ENCODE measurements at regions of chr2 and their contacts with region 1.

Region 1: GRCh38 chr2:11583840-11584524 is 50.1 kb downstream of the GREB1 start:
- DNase-seq: peak; percentile 66 to 77
- H3K4me3 ChIP-seq: no peak overlapping the region
- H3K4me3 Mint-ChIP-seq: no peak overlapping the region
- H3K27ac Mint-ChIP-seq: no peak overlapping the region
- H3K4me1 ChIP-seq: 0 out of 2 replicates have a peak, but pooled peaks cover 14% of the 10 kb centered on the region
- H3K4me1 Mint-ChIP-seq: no peaks in the 10 kb centered on the region
- H3K27me3 ChIP-seq: no peaks in the 10 kb centered on the region
- H3K27me3 Mint-ChIP-seq: no peaks in the 10 kb centered on the region
- CTCF ChIP-seq: peak; percentile 84 to 86

Region 2: DNA sequence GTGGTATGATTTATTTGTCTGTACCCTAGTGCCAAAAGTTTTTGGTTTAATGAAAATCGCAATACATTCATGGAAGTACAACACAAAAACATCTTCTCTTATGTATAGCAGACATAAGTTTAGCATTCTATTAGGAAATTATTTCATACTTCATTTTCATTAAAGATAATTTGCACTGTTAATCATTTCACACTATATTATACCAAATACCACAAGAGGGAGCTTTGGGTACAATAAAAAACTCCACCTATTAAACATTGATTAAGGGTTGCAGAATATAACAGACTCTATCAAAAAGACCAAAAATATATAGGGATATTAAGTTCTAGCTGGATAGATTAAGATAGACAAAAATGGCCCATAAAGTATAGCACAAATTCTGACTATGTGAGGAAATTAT is 349.7 kb before region 1 on chr2:
- CTCF ChIA-PET with region 1: no interaction called
- POLR2A ChIA-PET with region 1: no interaction called
- intact Hi-C with region 1: loop called (anchors 10 kb)
- DNase-seq: no peak
- H3K4me3 ChIP-seq: no peak overlapping the region
- H3K4me3 Mint-ChIP-seq: no peak overlapping the region
- H3K27ac Mint-ChIP-seq: no peak overlapping the region
- H3K4me1 ChIP-seq: no peaks in the 10 kb centered on the region
- H3K4me1 Mint-ChIP-seq: peaks cover 10% of the 10 kb centered on the region
- H3K27me3 ChIP-seq: no peaks in the 10 kb centered on the region
- H3K27me3 Mint-ChIP-seq: no peaks in the 10 kb centered on the region
- CTCF ChIP-seq: peak; percentile 13 to 21

Region 3: GRCh38 chr2:11417946-11418585 is 165.9 kb before region 1 on chr2:
- CTCF ChIA-PET with region 1: interaction called, 19 read pairs
- POLR2A ChIA-PET with region 1: no interaction called
- intact Hi-C with region 1: loop called (anchors 1 kb)
- DNase-seq: peak; percentile 63 to 77
- H3K4me3 ChIP-seq: no peak overlapping the region
- H3K4me3 Mint-ChIP-seq: no peak overlapping the region
- H3K27ac Mint-ChIP-seq: no peak overlapping the region
- H3K4me1 ChIP-seq: no peaks in the 10 kb centered on the region
- H3K4me1 Mint-ChIP-seq: no peaks in the 10 kb centered on the region
- H3K27me3 ChIP-seq: no peaks in the 10 kb centered on the region
- H3K27me3 Mint-ChIP-seq: no peaks in the 10 kb centered on the region
- CTCF ChIP-seq: peak; percentile 84 to 85

Region 4: GRCh38 chr2:11437602-11438001 is 146.4 kb before region 1 on chr2:
- CTCF ChIA-PET with region 1: no interaction called
- POLR2A ChIA-PET with region 1: no interaction called
- intact Hi-C with region 1: no loop called
- DNase-seq: no peak
- H3K4me3 ChIP-seq: no peak overlapping the region
- H3K4me3 Mint-ChIP-seq: no peak overlapping the region
- H3K27ac Mint-ChIP-seq: no peak overlapping the region
- H3K4me1 ChIP-seq: no peaks in the 10 kb centered on the region
- H3K4me1 Mint-ChIP-seq: no peaks in the 10 kb centered on the region
- H3K27me3 ChIP-seq: no peaks in the 10 kb centered on the region
- H3K27me3 Mint-ChIP-seq: no peaks in the 10 kb centered on the region
- CTCF ChIP-seq: no peak

Region 5: GRCh38 chr2:11477994-11478393 is 106.0 kb before region 1 on chr2:
- CTCF ChIA-PET with region 1: interaction called, 43 read pairs
- POLR2A ChIA-PET with region 1: no interaction called
- intact Hi-C with region 1: loop called (anchors 1 kb)
- DNase-seq: peak; percentile 85 to 86
- H3K4me3 ChIP-seq: no peak overlapping the region
- H3K4me3 Mint-ChIP-seq: no peak overlapping the region
- H3K27ac Mint-ChIP-seq: no peak overlapping the region
- H3K4me1 ChIP-seq: no peaks in the 10 kb centered on the region
- H3K4me1 Mint-ChIP-seq: no peaks in the 10 kb centered on the region
- H3K27me3 ChIP-seq: no peaks in the 10 kb centered on the region
- H3K27me3 Mint-ChIP-seq: peaks cover 6% of the 10 kb centered on the region
- CTCF ChIP-seq: peak; percentile 84 to 94

Region 6: GRCh38 chr2:11498543-11499080 is 85.4 kb before region 1 on chr2:
- CTCF ChIA-PET with region 1: no interaction called
- POLR2A ChIA-PET with region 1: no interaction called
- intact Hi-C with region 1: loop called (anchors 5 kb)
- DNase-seq: no peak
- H3K4me3 ChIP-seq: no peak overlapping the region
- H3K4me3 Mint-ChIP-seq: no peak overlapping the region
- H3K27ac Mint-ChIP-seq: no peak overlapping the region
- H3K4me1 ChIP-seq: peaks cover 11% of the 10 kb centered on the region; the same call in 1 of the 2 replicates
- H3K4me1 Mint-ChIP-seq: peaks cover 11% of the 10 kb centered on the region
- H3K27me3 ChIP-seq: no peaks in the 10 kb centered on the region
- H3K27me3 Mint-ChIP-seq: no peaks in the 10 kb centered on the region
- CTCF ChIP-seq: no peak

Region 7: DNA sequence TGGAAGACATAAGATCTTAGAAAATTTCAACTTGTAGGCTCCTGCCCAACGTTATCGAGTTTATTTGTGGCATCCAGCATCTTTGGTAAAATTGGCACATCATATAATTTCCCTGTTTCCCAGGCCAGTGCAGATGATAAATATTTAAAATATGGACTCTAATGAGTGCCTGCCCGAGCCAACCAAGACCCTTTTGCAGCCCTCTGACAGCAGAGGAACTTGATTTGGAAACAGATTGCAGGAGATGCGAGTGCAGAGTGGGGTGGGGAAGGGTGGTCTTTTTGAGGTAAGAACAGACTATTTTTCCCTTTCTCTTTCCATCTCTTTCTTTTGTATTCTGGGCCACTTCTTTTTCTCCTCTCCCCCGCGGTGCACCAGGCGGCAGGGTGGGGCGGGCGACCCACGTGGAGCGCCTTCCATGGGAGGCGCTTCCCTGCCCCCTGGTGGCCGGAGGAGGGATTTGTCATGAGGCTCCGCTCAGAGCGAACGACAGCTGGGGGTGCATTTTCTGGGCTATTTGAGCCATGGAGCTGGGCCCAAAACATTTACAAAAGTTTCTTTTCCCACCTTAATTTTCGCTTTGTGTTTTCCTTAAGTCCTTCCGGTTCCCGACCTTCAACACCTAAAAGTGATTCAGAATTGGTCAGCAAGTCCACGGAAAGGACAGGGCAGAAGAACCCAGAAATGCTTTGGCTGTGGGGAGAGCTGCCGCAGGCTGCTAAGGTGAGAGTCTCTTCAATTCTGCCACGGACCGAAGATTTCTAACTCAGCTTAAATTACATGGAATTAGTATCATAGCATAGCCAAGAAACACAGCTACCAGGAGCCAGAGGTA is 195.2 kb after region 1 on chr2:
- CTCF ChIA-PET with region 1: no interaction called
- POLR2A ChIA-PET with region 1: no interaction called
- intact Hi-C with region 1: loop called (anchors 2 kb)
- DNase-seq: peak; percentile 72 to 86
- H3K4me3 ChIP-seq: no peak overlapping the region
- H3K4me3 Mint-ChIP-seq: peak overlapping the region; percentile 54
- H3K27ac Mint-ChIP-seq: no peak overlapping the region
- H3K4me1 ChIP-seq: peaks cover 15% of the 10 kb centered on the region
- H3K4me1 Mint-ChIP-seq: peaks cover 13% of the 10 kb centered on the region
- H3K27me3 ChIP-seq: no peaks in the 10 kb centered on the region
- H3K27me3 Mint-ChIP-seq: no peaks in the 10 kb centered on the region
- CTCF ChIP-seq: peak; percentile 97 to 99

Measured in Caco-2 (cell line).